CD8-positive, alpha-beta memory T cell (primary cell): ENCODE measurements at regions of chr7 and their contacts with region 1.

Region 1: DNA sequence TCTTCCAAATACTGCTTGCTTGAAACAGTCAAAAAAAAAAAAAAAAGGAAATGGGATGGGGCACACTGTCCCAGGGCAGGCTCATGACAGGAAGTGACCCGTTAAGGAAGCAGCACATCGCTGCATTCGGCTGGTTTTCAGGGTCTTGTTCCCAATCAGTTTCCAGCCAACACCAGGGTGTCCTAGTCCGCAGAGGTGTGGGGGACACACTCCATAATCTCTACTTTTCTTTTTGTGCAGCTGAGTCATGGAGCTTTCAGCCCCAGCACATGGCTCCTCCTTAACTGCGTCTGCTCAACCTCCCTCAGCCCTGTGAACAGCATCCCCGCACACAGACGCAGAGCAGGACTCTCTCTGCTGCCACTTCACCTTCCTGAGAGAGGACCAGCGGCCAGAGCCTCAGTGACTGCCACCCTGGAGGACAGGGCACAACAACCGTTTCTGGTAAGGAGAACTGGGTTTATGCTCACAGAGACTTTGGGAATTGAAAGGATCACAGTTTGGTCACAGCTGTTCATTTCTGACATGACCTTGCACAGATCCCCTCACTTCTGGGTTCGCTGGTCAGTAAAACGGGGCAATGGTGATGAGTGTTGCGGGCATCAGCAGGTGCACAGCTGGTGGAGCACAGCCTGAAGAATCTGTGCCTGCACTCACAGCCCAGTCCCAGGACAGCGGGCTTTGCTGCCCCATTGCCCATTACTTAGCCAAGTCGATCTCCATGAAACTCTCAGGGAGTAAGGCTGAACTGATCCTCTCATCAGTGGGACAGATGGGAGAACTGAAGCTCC is at the start of gene GIMAP5:
- DNase-seq: peak in 4 of 5 donors; percentile 31 to 66 (median 52)
- H3K4me3 ChIP-seq: peak within 1 kb of the TSS; percentile 97
- H3K4me3 Mint-ChIP-seq: peak within 1 kb of the TSS; percentile 91 to 100 (median 97)
- H3K27ac ChIP-seq: peak within 1 kb of the TSS; percentile 82
- H3K27ac Mint-ChIP-seq: peak within 1 kb of the TSS; percentile 73 to 99 (median 96)
- H3K4me1 ChIP-seq: peaks cover 67% of the 10 kb centered on the region
- H3K4me1 Mint-ChIP-seq: peaks cover 64 to 74% (median 70%) of the 10 kb centered on the region in 3 donors
- H3K27me3 ChIP-seq: no peaks in the 10 kb centered on the region
- H3K27me3 Mint-ChIP-seq: no peaks in the 10 kb centered on the region
- total RNA-seq, gene GIMAP5: 63.9 to 70.4 TPM

Region 2: GRCh38 chr7:150567169-150567568 is 170.3 kb before region 1 on chr7 and contains the start of gene GIMAP4:
- CTCF ChIA-PET with region 1: interaction called, 11 read pairs
- POLR2A ChIA-PET with region 1: interaction called, 3 read pairs
- DNase-seq: peak in 2 of 5 donors; percentile 36 to 56
- H3K4me3 ChIP-seq: peak within 1 kb of the TSS; percentile 90
- H3K4me3 Mint-ChIP-seq: peak within 1 kb of the TSS; percentile 97 to 100 (median 100)
- H3K27ac ChIP-seq: peak within 1 kb of the TSS; percentile 67
- H3K27ac Mint-ChIP-seq: peak within 1 kb of the TSS; percentile 86 to 99 (median 98)
- H3K4me1 ChIP-seq: peaks cover 74% of the 10 kb centered on the region
- H3K4me1 Mint-ChIP-seq: peaks cover 72 to 86% (median 85%) of the 10 kb centered on the region in 3 donors
- H3K27me3 ChIP-seq: no peaks in the 10 kb centered on the region
- H3K27me3 Mint-ChIP-seq: peaks cover 0 to 4% of the 10 kb centered on the region in 2 donors
- total RNA-seq, gene GIMAP4: 57.3 to 59.3 TPM

Region 3: DNA sequence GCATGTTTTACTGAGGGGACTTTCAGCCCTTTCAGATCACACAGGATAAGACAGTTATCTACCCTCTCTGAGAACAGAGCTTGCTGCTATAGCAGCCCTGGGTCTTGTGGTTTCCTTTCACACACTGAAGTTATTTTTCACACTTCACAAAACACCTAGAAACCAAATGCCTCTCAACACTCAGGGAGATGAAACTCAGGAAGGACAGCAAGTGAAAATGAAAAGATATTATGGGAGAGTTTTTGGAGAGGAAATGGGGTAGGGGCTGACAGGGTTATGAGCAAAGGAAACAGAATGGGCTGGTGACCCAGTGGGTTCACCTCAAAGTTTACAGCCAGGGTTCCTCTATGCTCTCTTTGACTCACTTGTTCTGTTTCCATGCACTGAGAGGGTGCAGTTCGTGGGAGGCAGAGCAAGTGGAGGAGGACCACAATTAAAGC is 69.0 kb before region 1 on chr7:
- CTCF ChIA-PET with region 1: interaction called, 5 read pairs
- POLR2A ChIA-PET with region 1: interaction called, 11 read pairs
- DNase-seq: peak; percentile 34 to 89 (median 78)
- H3K4me3 ChIP-seq: peak overlapping the region; percentile 26
- H3K4me3 Mint-ChIP-seq: peak overlapping the region; percentile 32 to 90 (median 78)
- H3K27ac ChIP-seq: peak overlapping the region; percentile 0
- H3K27ac Mint-ChIP-seq: peak overlapping the region; percentile 90 to 100 (median 98)
- H3K4me1 ChIP-seq: peaks cover 88% of the 10 kb centered on the region
- H3K4me1 Mint-ChIP-seq: peaks cover 87 to 99% (median 96%) of the 10 kb centered on the region in 3 donors
- H3K27me3 ChIP-seq: no peaks in the 10 kb centered on the region
- H3K27me3 Mint-ChIP-seq: no peaks in the 10 kb centered on the region

Region 4: DNA sequence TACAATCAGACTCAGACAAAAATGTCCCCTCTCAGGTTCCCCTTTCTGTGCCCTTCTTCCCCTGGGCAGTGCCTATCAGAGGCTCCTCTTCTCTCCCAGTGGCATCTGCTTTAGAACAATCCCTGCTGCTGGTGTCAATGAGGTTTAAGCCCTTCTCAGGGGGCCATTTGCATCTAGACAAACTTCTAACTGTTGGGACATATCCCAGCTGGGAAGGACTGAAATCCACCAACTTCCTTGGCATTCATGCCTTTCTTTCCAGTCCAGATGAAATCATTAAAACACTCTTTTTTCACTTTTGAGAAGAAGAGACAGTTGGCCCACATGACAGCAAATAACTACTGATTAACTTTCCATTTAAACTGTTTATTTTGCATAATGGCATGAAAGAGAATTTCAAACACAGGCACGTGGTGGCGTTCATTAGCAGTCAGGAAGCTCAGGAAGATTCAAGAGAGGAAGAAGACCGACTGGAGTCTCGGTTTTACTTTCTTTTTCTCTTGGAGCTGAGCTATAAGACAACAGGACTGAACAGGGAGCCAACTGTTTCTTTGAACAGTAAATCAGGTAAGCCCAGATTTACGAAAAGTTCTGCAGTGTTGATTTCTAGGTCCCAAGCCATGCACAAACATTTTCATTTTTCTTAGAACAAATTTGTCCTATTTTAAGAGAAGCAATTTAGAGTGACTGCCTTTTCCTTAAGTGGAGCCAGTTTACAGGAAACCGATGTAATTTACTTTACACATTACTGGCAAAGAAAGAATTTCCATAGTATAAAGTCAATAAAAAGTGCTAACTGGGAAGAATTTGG is 52.0 kb before region 1 on chr7 and contains the start of gene GIMAP2:
- CTCF ChIA-PET with region 1: interaction called, 6 read pairs
- POLR2A ChIA-PET with region 1: interaction called, 16 read pairs
- DNase-seq: peak in 3 of 5 donors; percentile 57 to 67 (median 59)
- H3K4me3 ChIP-seq: peak within 1 kb of the TSS; percentile 79
- H3K4me3 Mint-ChIP-seq: peak within 1 kb of the TSS; percentile 94 to 100 (median 97)
- H3K27ac ChIP-seq: peak within 1 kb of the TSS; percentile 60
- H3K27ac Mint-ChIP-seq: peak within 1 kb of the TSS; percentile 93 to 100 (median 97)
- H3K4me1 ChIP-seq: peaks cover 56% of the 10 kb centered on the region
- H3K4me1 Mint-ChIP-seq: peaks cover 76 to 93% (median 83%) of the 10 kb centered on the region in 3 donors
- H3K27me3 ChIP-seq: no peaks in the 10 kb centered on the region
- H3K27me3 Mint-ChIP-seq: no peaks in the 10 kb centered on the region
- total RNA-seq, gene GIMAP2: 40.4 to 42.9 TPM

Region 5: DNA sequence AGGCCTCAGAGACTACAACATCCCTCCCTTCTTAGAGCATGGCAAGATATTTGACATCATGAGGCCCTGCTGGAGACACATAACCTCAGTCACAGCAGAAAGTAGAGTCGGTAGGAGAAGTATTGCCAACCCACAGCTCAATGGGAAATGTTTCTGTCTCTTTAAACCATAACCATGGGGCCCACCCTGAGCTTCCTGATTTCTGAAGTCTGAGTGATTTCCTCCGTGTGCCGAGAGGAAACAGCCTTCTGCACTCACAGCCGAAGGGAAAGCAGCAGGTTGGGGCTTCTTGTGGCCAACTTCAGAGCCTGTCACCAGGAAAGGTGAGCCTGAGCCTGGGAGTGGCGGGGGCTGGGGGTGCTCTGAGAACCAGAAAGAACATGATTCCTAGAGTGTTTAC is 21.1 kb before region 1 on chr7 and contains the start of gene GIMAP1:
- CTCF ChIA-PET with region 1: interaction called, 13 read pairs
- POLR2A ChIA-PET with region 1: interaction called, 17 read pairs
- DNase-seq: peak; percentile 24 to 81 (median 71)
- H3K4me3 ChIP-seq: peak within 1 kb of the TSS; percentile 77
- H3K4me3 Mint-ChIP-seq: peak within 1 kb of the TSS; percentile 94 to 100 (median 100)
- H3K27ac ChIP-seq: peak within 1 kb of the TSS; percentile 79
- H3K27ac Mint-ChIP-seq: peak within 1 kb of the TSS; percentile 84 to 99 (median 98)
- H3K4me1 ChIP-seq: peaks cover 51% of the 10 kb centered on the region
- H3K4me1 Mint-ChIP-seq: peaks cover 60 to 80% (median 75%) of the 10 kb centered on the region in 3 donors
- H3K27me3 ChIP-seq: no peaks in the 10 kb centered on the region
- H3K27me3 Mint-ChIP-seq: no peaks in the 10 kb centered on the region
- total RNA-seq, gene GIMAP1: 9.8 to 10.0 TPM

Region 6: DNA sequence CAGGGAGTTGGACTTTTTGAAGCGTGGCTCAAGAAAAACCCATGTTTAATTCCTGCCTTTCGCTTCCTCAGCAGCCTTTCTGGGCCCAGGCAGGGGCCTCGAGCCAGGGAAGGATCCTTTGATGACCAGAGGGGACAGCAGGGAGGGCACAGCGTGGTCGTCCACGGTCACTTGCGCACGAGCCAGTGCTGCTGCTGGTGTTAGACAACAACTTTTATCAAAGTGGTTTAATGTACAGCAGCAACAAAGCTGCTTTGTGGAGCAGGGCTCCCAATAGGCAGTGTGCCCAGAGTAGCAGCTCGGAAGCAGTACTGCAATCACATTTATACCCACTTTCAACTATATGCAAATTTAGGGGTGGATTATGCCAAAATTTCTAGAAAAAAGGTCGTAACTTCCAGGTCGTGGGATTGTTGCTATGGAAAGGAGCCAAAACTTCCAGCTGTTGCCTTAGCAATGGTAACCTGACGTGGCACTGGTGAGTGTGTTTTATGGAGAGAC is 15.0 kb before region 1 on chr7:
- CTCF ChIA-PET with region 1: interaction called, 13 read pairs
- POLR2A ChIA-PET with region 1: interaction called, 17 read pairs
- DNase-seq: no peak
- H3K4me3 ChIP-seq: peak overlapping the region; percentile 7
- H3K4me3 Mint-ChIP-seq: peak overlapping the region; percentile 70 to 80 (median 73)
- H3K27ac ChIP-seq: no peak overlapping the region
- H3K27ac Mint-ChIP-seq: peak overlapping the region; percentile 29 to 89 (median 68)
- H3K4me1 ChIP-seq: peaks cover 60% of the 10 kb centered on the region
- H3K4me1 Mint-ChIP-seq: peaks cover 74 to 85% (median 84%) of the 10 kb centered on the region in 3 donors
- H3K27me3 ChIP-seq: no peaks in the 10 kb centered on the region
- H3K27me3 Mint-ChIP-seq: no peaks in the 10 kb centered on the region

Region 7: GRCh38 chr7:150753826-150754603 is 16.6 kb after region 1 on chr7:
- CTCF ChIA-PET with region 1: interaction called, 17 read pairs
- POLR2A ChIA-PET with region 1: interaction called, 27 read pairs
- DNase-seq: no peak
- H3K4me3 ChIP-seq: peak overlapping the region; percentile 15
- H3K4me3 Mint-ChIP-seq: peak overlapping the region in 6 of 7 donors; percentile 33 to 66 (median 54)
- H3K27ac ChIP-seq: no peak overlapping the region
- H3K27ac Mint-ChIP-seq: peak overlapping the region; percentile 75 to 97 (median 88)
- H3K4me1 ChIP-seq: peaks cover 79% of the 10 kb centered on the region
- H3K4me1 Mint-ChIP-seq: peaks cover 65 to 82% (median 81%) of the 10 kb centered on the region in 3 donors
- H3K27me3 ChIP-seq: no peaks in the 10 kb centered on the region
- H3K27me3 Mint-ChIP-seq: peaks cover 0 to 3% of the 10 kb centered on the region in 2 donors